ENCODE measurements at regions of chr6 and their contacts with region 1.

Region 1: DNA sequence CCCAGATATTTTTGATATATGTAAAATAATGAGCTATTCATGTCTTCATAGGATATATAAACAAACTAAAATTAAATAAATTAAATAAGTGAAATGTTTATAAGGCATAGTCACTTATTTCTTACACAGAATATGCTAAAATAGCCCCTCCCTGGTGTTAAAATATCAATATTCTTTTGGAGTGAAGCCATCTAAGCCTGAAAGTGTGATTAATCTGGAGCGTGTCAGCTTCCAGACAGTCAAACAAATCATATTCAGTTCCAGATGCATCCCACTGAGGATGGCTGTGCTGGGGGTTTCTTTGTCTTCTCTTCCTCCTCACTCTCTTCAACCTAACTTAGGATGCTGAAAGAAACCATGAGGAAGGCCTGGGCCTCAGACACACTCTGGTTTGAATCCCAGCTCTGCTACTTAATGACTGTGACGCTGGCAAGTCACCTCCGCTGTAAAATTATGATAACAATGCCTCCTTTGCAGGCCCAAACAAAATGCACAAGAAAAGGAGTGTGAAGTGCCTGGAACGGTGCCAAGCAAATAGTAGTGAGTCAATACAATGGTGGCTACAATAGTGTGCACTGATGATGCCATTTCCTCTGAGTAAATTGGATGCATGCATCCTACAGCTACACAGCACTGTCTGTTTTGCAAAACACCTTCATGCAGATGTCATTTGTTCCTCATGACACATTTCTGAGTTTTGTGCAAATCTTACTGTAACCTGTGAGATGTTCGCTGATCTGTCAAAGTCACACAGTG is 161.4 kb downstream of the FOXC1 start:
- DNase-seq: peak; percentile 67
- H3K4me3 Mint-ChIP-seq: no peak overlapping the region
- H3K27ac Mint-ChIP-seq: no peak overlapping the region
- H3K4me1 Mint-ChIP-seq: peaks cover 42% of the 10 kb centered on the region
- H3K27me3 Mint-ChIP-seq: no peaks in the 10 kb centered on the region

Region 2: GRCh38 chr6:1786455-1787453 is 15.6 kb after region 1 on chr6:
- CTCF ChIA-PET with region 1: no interaction called
- POLR2A ChIA-PET with region 1: interaction called, 7 read pairs
- intact Hi-C with region 1: loop called (anchors 1 kb)
- DNase-seq: peak; percentile 76
- H3K4me3 Mint-ChIP-seq: no peak overlapping the region
- H3K27ac Mint-ChIP-seq: peak overlapping the region; percentile 18
- H3K4me1 Mint-ChIP-seq: peaks cover 10% of the 10 kb centered on the region
- H3K27me3 Mint-ChIP-seq: no peaks in the 10 kb centered on the region

Region 3: GRCh38 chr6:2103644-2104523 is 332.7 kb after region 1 on chr6:
- CTCF ChIA-PET with region 1: no interaction called
- POLR2A ChIA-PET with region 1: no interaction called
- intact Hi-C with region 1: no loop called
- DNase-seq: no peak
- H3K4me3 Mint-ChIP-seq: no peak overlapping the region
- H3K27ac Mint-ChIP-seq: no peak overlapping the region
- H3K4me1 Mint-ChIP-seq: no peaks in the 10 kb centered on the region
- H3K27me3 Mint-ChIP-seq: peaks cover 2% of the 10 kb centered on the region

Measured in activated CD4-positive, alpha-beta memory T cell treated with anti-CD3 and anti-CD28 coated beads for 36 hours (primary cell).